Motor neuron (in vitro differentiated cells): ENCODE measurements at regions of chr11 and their contacts with region 1.

Region 1: DNA sequence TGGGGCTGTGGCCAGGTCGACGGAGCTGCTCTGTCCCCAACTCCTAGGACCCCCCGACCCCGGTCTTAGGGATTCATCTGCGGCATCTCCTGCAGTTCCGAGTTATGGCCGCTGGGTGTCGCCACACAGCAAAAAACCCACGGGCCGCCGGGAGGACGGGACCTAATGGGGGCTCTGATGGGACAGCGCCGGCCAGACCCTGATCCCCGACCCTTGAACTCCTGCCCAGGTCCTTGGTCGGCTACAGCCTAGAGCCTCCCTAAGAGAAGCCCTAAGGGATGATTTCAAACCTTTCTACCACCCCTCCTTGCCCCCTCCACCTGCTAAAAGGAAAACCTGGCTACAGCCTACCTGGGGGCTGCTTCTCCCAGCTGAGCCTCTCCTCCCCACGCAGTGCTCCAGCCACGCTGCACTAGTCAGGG is 30.8 kb upstream of the LRRC10B start:
- ATAC-seq: peak; percentile 6 to 61 (median 16)
- H3K4me3 ChIP-seq: no peak overlapping the region
- H3K27ac ChIP-seq: no peak overlapping the region
- H3K4me1 ChIP-seq: peaks cover 25 to 34% of the 10 kb centered on the region in 2 donors

Region 2: GRCh38 chr11:61555051-61555969 is 77.6 kb after region 1 on chr11:
- in situ Hi-C with region 1: no loop called
- ATAC-seq: peak; percentile 16 to 81 (median 74)
- H3K4me3 ChIP-seq: peak overlapping the region; percentile 18 to 35 (median 22)
- H3K27ac ChIP-seq: peak overlapping the region; percentile 61 to 78
- H3K4me1 ChIP-seq: peaks cover 33 to 36% of the 10 kb centered on the region in 2 donors

Region 3: GRCh38 chr11:61602775-61603569 is 125.2 kb after region 1 on chr11:
- in situ Hi-C with region 1: no loop called
- ATAC-seq: peak; percentile 88 to 96 (median 94)
- H3K4me3 ChIP-seq: no peak overlapping the region
- H3K27ac ChIP-seq: peak overlapping the region in 1 of 2 donors; percentile 25
- H3K4me1 ChIP-seq: peaks cover 15 to 18% of the 10 kb centered on the region in 2 donors

Region 4: DNA sequence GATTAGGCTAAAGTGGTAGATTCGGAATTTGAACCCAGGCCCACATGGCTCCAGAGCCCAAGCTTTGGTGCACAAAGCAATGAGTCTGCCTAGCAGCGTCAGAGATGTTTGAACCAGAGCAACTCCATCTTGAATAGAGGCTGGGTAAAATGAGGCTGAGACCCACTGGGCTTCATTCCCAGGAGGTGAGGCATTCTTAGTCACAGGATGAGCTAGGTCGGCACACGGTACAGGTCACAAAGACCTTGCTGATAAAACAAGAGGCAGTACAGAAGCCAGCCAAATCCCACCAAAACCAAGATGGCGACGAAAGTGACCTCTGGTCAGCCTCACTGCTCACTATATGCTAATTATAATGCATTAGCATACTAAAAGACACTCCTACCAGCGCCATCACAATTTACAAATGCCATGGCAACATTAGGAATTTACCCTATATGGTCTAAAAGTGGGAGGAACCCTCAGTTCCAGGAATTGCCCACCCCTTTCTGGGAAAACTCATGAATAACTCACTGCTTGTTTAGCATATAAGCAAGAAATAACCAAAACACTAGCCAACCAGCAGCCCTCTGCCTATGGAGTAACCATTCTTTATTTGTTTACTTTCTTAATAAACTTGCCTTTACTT is 162.2 kb after region 1 on chr11:
- in situ Hi-C with region 1: loop called in 7 of 9 experiments (anchors 10 to 25 kb)
- ATAC-seq: peak in 7 of 8 experiments; percentile 15 to 73 (median 40)
- H3K4me3 ChIP-seq: no peak overlapping the region
- H3K27ac ChIP-seq: peak overlapping the region in 1 of 2 donors; percentile 75
- H3K4me1 ChIP-seq: peaks cover 20 to 30% of the 10 kb centered on the region in 2 donors